ENCODE measurements at regions of chr1 and their contacts with region 1.

Region 1: GRCh38 chr1:180502360-180503273 is at the start of gene ACBD6:
- DNase-seq: peak; percentile 92
- H3K4me3 Mint-ChIP-seq: peak within 1 kb of the TSS; percentile 98
- H3K27ac Mint-ChIP-seq: peak within 1 kb of the TSS; percentile 93
- H3K4me1 Mint-ChIP-seq: peaks cover 34% of the 10 kb centered on the region
- H3K27me3 Mint-ChIP-seq: no peaks in the 10 kb centered on the region
- total RNA-seq, gene ACBD6: 31.1 to 32.9 TPM

Region 2: DNA sequence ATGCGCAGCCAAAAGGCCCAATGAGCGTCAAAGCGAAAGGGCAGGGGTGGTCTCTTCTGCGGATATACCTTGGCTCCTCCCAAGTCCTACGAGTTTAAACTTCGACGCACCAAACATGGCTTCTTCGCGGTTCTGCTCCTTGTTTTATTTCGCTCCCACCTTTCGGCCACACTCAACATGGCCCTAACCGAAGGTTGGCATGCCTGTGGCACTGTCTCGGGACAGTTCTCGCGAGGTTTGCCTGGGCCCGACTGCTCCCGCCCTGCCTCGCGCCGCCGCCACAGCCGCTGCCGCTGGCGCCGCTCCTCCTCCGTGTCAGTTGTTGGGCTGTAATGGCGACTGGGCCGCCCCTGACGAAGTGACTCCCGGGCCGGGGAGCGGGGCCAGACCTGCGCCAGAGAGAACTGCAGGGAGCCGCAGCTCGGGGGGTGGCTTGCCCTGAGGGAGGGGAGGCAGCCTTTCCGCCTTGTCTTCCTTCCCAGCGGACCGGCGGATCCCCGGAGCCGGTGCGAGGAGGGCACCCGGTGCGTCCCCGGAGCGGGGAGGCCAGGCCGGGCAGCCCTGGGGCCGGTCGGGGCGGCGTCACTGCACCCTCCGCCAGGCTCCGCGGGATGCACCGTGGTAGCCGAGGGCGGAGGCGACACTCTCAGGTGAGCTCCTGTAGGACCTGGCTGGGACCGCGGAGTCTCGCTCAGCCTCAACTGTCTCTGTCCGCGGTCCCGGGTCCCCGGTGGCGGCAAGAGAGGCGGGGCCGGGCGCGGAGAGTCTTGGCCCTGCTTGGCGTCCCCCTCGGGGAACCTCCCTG is 547.9 kb before region 1 on chr1 and contains the start of gene CEP350:
- CTCF ChIA-PET with region 1: no interaction called
- intact Hi-C with region 1: loop called (anchors 5 kb)
- DNase-seq: peak; percentile 99
- H3K4me3 Mint-ChIP-seq: peak within 1 kb of the TSS; percentile 85
- H3K27ac Mint-ChIP-seq: peak within 1 kb of the TSS; percentile 95
- H3K4me1 Mint-ChIP-seq: peaks cover 41% of the 10 kb centered on the region
- H3K27me3 Mint-ChIP-seq: no peaks in the 10 kb centered on the region
- total RNA-seq, gene CEP350: 30.3 to 36.0 TPM

Region 3: GRCh38 chr1:180198196-180198595 is 304.4 kb before region 1 on chr1:
- CTCF ChIA-PET with region 1: no interaction called
- intact Hi-C with region 1: no loop called
- DNase-seq: no peak
- H3K4me3 Mint-ChIP-seq: no peak overlapping the region
- H3K27ac Mint-ChIP-seq: no peak overlapping the region
- H3K4me1 Mint-ChIP-seq: no peaks in the 10 kb centered on the region
- H3K27me3 Mint-ChIP-seq: no peaks in the 10 kb centered on the region

Region 4: DNA sequence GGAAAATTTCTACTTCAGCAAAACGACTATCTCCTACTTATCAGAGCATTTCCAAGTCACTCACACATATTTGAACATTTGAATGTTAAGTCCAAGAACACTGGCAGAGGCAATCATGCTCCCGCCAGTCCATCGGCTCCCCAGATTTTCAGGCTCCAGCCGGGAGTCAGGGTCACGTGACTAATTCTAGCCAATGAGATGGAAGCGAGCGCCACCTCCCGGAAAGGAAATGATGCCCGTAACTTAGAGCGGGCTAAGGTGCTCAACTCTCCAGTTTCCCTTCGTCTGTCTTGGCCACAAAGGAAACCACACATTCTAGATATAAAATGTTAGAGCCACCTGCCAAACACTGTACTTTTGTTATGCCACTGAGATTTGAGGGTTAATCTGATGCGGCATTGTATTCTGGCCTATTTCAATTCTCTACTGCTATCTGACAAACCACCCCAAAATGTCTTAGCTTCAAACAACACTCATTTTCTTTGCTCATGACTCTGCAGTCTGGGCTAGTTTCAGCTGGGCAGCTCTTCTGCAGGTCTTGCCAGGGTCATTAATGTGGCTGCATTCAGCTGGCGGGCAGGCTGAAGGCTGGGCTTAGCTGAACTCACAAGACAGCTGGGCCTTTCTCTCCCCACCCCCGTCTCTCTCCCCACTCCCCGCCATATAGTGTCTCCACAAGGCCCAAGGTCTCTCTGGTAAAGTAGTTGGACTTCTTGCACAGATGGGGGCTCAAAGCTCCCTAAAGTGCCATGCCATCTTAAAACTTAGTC is 289.0 kb before region 1 on chr1:
- CTCF ChIA-PET with region 1: no interaction called
- intact Hi-C with region 1: no loop called
- DNase-seq: peak; percentile 80
- H3K4me3 Mint-ChIP-seq: peak overlapping the region; percentile 56
- H3K27ac Mint-ChIP-seq: no peak overlapping the region
- H3K4me1 Mint-ChIP-seq: peaks cover 20% of the 10 kb centered on the region
- H3K27me3 Mint-ChIP-seq: peaks cover 4% of the 10 kb centered on the region

Region 5: DNA sequence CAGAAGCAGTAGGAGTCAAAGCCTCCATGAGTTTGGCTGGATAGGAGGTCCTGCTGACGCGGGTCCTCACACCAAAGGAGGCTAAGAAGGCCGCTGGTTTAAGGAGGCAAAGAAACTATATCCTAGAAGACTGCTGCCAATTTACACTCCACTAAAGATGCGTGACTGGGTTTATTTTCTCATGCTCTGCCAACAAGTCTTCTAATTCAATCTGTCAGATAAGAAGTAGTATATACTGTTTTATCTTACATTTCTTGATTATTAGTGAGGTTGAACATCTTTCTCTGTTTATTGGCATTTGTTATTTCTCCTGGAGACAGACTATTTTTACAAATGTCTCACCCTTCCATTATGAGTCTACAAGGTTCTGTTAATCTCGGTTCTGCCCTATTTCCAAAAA is 34.3 kb before region 1 on chr1:
- CTCF ChIA-PET with region 1: no interaction called
- intact Hi-C with region 1: no loop called
- DNase-seq: no peak
- H3K4me3 Mint-ChIP-seq: no peak overlapping the region
- H3K27ac Mint-ChIP-seq: no peak overlapping the region
- H3K4me1 Mint-ChIP-seq: peaks cover 13% of the 10 kb centered on the region
- H3K27me3 Mint-ChIP-seq: no peaks in the 10 kb centered on the region

Region 6: GRCh38 chr1:180482425-180483275 is 20.0 kb before region 1 on chr1:
- CTCF ChIA-PET with region 1: interaction called, 12 read pairs
- intact Hi-C with region 1: no loop called
- DNase-seq: no peak
- H3K4me3 Mint-ChIP-seq: no peak overlapping the region
- H3K27ac Mint-ChIP-seq: no peak overlapping the region
- H3K4me1 Mint-ChIP-seq: peaks cover 11% of the 10 kb centered on the region
- H3K27me3 Mint-ChIP-seq: no peaks in the 10 kb centered on the region

Region 7: GRCh38 chr1:180560868-180561600 is 58.4 kb after region 1 on chr1:
- CTCF ChIA-PET with region 1: no interaction called
- intact Hi-C with region 1: no loop called
- DNase-seq: no peak
- H3K4me3 Mint-ChIP-seq: no peak overlapping the region
- H3K27ac Mint-ChIP-seq: no peak overlapping the region
- H3K4me1 Mint-ChIP-seq: no peaks in the 10 kb centered on the region
- H3K27me3 Mint-ChIP-seq: peaks cover 3% of the 10 kb centered on the region

Region 8: GRCh38 chr1:180571832-180572636 is 69.4 kb after region 1 on chr1:
- CTCF ChIA-PET with region 1: no interaction called
- intact Hi-C with region 1: loop called (anchors 1 kb)
- DNase-seq: peak; percentile 67
- H3K4me3 Mint-ChIP-seq: no peak overlapping the region
- H3K27ac Mint-ChIP-seq: peak overlapping the region; percentile 72
- H3K4me1 Mint-ChIP-seq: peaks cover 25% of the 10 kb centered on the region
- H3K27me3 Mint-ChIP-seq: peaks cover 10% of the 10 kb centered on the region

Region 9: DNA sequence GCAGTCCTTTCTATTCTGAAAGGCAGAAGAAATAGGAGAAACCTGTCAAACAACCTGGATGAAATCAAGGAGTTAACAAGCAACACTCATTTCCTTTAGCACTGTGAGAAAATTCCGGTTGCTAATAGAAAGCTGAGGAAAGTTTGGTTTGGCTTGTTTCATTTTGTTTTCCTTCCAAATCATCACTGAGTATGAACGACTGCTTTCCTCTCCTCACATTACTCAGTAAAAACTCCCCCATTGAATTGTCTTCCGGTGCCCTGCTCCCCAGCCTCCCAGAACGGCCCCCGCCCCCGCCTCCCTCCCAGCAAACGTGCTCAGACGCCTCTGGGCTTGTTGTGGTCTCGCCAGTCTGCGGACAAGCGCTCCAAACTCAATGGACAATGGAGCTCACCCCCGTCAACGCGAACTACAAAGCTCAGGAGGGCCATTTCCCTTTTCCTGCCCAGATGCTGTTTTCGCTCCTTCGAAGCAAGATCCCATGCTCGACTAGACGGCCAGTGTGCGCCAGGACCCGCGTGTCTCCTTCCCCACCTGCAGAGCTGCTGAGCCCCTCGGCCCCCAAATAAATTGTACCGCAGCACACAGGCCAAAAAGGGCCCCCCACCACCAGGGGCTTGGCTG is 519.3 kb after region 1 on chr1:
- CTCF ChIA-PET with region 1: no interaction called
- intact Hi-C with region 1: loop called (anchors 2 kb)
- DNase-seq: peak; percentile 78
- H3K4me3 Mint-ChIP-seq: peak overlapping the region; percentile 86
- H3K27ac Mint-ChIP-seq: peak overlapping the region; percentile 94
- H3K4me1 Mint-ChIP-seq: peaks cover 35% of the 10 kb centered on the region
- H3K27me3 Mint-ChIP-seq: no peaks in the 10 kb centered on the region

Region 10: DNA sequence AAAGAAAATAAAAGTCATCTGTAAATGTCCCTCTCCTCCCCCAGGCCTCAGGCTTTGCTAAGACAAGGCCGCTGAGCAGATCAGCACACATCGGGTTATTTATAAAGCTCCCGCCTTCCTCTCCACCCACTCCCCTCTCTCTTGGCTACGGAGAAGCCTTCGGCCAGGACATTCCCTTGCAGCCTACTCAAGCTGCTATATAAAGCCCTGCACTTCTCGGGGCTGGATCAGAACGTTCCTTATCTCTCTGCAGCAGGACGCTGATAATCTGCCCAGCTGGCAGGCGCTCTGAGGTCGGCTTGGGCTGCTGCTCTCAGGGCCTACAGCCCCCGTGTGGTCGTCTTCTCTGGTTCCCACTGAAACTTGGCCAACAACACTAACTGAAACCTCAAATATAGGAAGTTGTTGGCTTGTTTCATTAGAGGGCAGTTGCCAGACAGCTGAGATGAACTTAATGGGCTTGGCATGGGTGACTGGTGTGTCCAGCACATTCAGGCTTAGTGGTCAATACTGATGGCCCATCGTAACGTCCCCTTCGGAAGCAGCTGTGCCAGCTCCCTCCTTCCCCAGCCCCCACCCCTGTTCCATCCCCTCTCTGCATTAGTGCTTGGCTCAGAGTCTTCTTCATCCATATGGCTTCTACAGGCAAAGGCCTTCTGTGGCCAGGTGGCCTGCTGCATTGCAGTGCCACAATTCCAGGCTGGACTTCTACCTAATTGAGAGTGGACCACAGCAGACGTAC is 650.4 kb after region 1 on chr1:
- CTCF ChIA-PET with region 1: no interaction called
- intact Hi-C with region 1: loop called (anchors 2 kb)
- DNase-seq: no peak
- H3K4me3 Mint-ChIP-seq: no peak overlapping the region
- H3K27ac Mint-ChIP-seq: no peak overlapping the region
- H3K4me1 Mint-ChIP-seq: peaks cover 37% of the 10 kb centered on the region
- H3K27me3 Mint-ChIP-seq: no peaks in the 10 kb centered on the region

Measured in activated naive CD4-positive, alpha-beta T cell treated with anti-CD3 and anti-CD28 coated beads for 36 hours (primary cell).